ENCODE measurements at regions of chr10 and their contacts with region 1.

Region 1: GRCh38 chr10:17512341-17513001 is 58.1 kb upstream of the ST8SIA6 start:
- DNase-seq: peak; percentile 60
- H3K4me3 Mint-ChIP-seq: peak overlapping the region; percentile 26
- H3K27ac Mint-ChIP-seq: peak overlapping the region; percentile 88
- H3K4me1 Mint-ChIP-seq: peaks cover 13% of the 10 kb centered on the region
- H3K27me3 Mint-ChIP-seq: no peaks in the 10 kb centered on the region
- CTCF ChIP-seq: no peak

Region 2: GRCh38 chr10:17527516-17528146 is 15.2 kb after region 1 on chr10:
- CTCF ChIA-PET with region 1: interaction called, 6 read pairs
- intact Hi-C with region 1: loop called (anchors 2 kb)
- DNase-seq: peak; percentile 34
- H3K4me3 Mint-ChIP-seq: no peak overlapping the region
- H3K27ac Mint-ChIP-seq: peak overlapping the region; percentile 76
- H3K4me1 Mint-ChIP-seq: peaks cover 27% of the 10 kb centered on the region
- H3K27me3 Mint-ChIP-seq: no peaks in the 10 kb centered on the region
- CTCF ChIP-seq: no peak

Measured in Calu3 (cell line).